Activated CD8-positive, alpha-beta T cell treated with anti-CD3 and anti-CD28 coated beads for 36 hours (primary cell): ENCODE measurements at regions of chr2 and their contacts with region 1.

Region 1: DNA sequence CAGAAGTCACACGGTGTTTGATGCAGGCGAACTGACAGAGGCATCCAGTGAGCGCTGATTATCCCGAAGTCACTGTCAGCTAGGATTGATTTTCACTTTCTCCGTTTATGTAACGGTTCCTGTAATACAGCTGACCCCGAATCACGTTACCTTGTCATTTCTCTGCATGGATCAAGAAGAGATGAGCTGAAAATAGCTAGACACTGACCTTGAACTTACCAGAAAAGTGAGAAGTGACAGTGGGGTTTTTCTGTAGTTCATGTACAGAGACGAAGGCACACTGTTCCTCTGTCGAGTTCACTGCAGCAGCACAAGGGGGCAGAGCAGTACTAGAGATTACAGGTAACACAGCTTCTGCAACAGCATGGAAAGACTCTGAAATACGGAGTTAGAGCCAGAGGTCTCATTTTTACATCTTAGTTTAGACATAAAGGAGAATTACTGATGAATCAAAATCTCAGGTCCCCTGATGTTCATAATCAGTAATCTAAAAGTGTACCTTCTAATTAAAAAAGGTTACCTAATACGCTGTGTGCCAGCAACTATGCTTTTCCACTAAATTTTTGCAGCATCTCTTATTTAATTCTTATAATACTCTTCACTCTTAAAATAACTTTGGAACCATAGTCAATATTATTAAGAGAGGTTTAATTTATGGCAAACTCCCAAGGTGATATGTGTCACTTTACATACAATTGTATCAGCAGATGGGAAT is 33.1 kb downstream of the ARHGAP15 start:
- DNase-seq: peak; percentile 70
- ATAC-seq: peak; percentile 95
- H3K4me3 Mint-ChIP-seq: no peak overlapping the region
- H3K27ac Mint-ChIP-seq: peak overlapping the region; percentile 31
- H3K4me1 Mint-ChIP-seq: peaks cover 79% of the 10 kb centered on the region
- H3K27me3 Mint-ChIP-seq: no peaks in the 10 kb centered on the region
- CTCF ChIP-seq: peak; percentile 82

Region 2: DNA sequence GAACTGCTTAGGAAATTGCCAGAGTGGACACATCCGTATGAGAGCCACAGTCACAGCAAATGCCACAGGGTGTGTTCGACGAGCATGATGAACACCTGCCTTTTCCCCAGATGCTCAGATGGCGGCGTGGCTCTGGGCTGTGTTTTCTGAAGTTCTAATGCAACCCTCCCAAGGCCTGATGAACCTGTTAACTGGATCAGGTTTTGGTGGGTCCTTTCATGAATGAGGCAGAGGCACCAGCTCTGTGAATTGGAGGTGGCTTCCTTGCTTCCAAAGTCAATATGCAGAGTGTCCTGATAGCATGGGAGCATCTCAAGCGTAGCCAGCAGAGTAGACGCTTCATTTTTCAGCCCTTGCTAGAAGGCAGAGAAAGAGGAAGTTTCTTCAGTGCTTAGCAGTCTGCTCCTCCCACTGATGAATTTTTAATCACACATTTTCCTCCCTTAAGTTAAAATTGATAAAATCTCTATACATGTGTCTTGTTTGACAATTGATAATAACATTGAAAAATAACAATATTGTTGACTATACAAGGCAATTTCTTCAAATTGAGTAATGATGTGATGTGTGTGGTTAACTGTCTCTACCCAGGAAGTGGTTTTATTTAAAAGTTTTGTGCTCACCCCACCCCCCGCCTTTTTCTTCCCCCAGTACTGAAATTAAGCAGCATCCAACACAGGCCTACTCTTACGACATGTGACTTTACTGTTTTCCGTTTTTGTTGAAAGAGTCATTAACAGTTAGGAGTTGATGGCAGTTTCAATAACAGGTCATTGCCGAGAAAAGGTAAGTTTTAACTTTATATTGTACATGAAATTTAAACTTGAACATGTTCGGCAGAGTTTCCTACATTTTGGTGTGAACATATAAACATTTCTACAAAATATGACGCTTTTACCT is 33.3 kb before region 1 on chr2 and contains the start of gene ARHGAP15:
- CTCF ChIA-PET with region 1: interaction called, 11 read pairs
- POLR2A ChIA-PET with region 1: interaction called, 12 read pairs
- intact Hi-C with region 1: no loop called
- DNase-seq: peak; percentile 91
- ATAC-seq: peak; percentile 77
- H3K4me3 Mint-ChIP-seq: peak within 1 kb of the TSS; percentile 81
- H3K27ac Mint-ChIP-seq: peak within 1 kb of the TSS; percentile 100
- H3K4me1 Mint-ChIP-seq: peaks cover 39% of the 10 kb centered on the region
- H3K27me3 Mint-ChIP-seq: no peaks in the 10 kb centered on the region
- CTCF ChIP-seq: no peak
- total RNA-seq, gene ARHGAP15: 71.3 to 72.8 TPM

Region 3: GRCh38 chr2:143150287-143150686 is 12.0 kb before region 1 on chr2:
- CTCF ChIA-PET with region 1: interaction called, 17 read pairs
- POLR2A ChIA-PET with region 1: interaction called, 4 read pairs
- intact Hi-C with region 1: no loop called
- DNase-seq: no peak
- ATAC-seq: no peak
- H3K4me3 Mint-ChIP-seq: peak overlapping the region; percentile 58
- H3K27ac Mint-ChIP-seq: peak overlapping the region; percentile 86
- H3K4me1 Mint-ChIP-seq: peaks cover 80% of the 10 kb centered on the region
- H3K27me3 Mint-ChIP-seq: no peaks in the 10 kb centered on the region
- CTCF ChIP-seq: no peak

Region 4: GRCh38 chr2:143223556-143223955 is 61.3 kb after region 1 on chr2:
- CTCF ChIA-PET with region 1: interaction called, 51 read pairs
- POLR2A ChIA-PET with region 1: interaction called, 3 read pairs
- intact Hi-C with region 1: loop called (anchors 5 kb)
- DNase-seq: no peak
- ATAC-seq: no peak
- H3K4me3 Mint-ChIP-seq: no peak overlapping the region
- H3K27ac Mint-ChIP-seq: peak overlapping the region; percentile 59
- H3K4me1 Mint-ChIP-seq: peaks cover 51% of the 10 kb centered on the region
- H3K27me3 Mint-ChIP-seq: no peaks in the 10 kb centered on the region
- CTCF ChIP-seq: no peak

Region 5: DNA sequence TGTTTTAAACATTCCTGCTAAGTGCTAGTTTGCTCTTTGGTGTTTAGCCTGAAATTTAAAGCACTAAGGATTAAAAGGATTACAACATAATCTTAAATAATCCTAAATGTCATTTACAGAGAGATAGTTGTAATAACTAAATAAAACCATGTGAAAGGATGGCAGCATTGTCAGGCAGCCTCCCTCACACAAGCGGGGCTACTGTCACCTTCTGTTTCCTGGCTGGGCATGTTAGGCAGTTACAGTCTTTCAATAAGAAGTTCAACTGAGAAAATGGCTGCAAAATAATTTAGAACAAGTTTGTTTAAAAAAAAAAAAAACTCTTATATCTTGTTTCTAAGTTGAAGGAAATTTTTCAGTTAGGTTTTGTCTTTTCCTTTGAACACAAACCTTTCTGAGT is 91.8 kb after region 1 on chr2:
- CTCF ChIA-PET with region 1: interaction called, 169 read pairs
- POLR2A ChIA-PET with region 1: interaction called, 3 read pairs
- intact Hi-C with region 1: loop called (anchors 1 kb)
- DNase-seq: peak; percentile 60
- ATAC-seq: peak; percentile 33
- H3K4me3 Mint-ChIP-seq: peak overlapping the region; percentile 33
- H3K27ac Mint-ChIP-seq: peak overlapping the region; percentile 85
- H3K4me1 Mint-ChIP-seq: peaks cover 70% of the 10 kb centered on the region
- H3K27me3 Mint-ChIP-seq: no peaks in the 10 kb centered on the region
- CTCF ChIP-seq: no peak